ENCODE measurements at regions of chr18 and their contacts with region 1.

Region 1: GRCh38 chr18:74459889-74460288 is 2.8 kb upstream of the DIPK1C start:
- DNase-seq: no peak
- H3K4me3 ChIP-seq: no peak overlapping the region
- H3K27ac ChIP-seq: no peak overlapping the region
- H3K4me1 ChIP-seq: peaks cover 12% of the 10 kb centered on the region
- H3K27me3 ChIP-seq: no peaks in the 10 kb centered on the region
- CTCF ChIP-seq: no peak
- POLR2A ChIP-seq: no peak

Region 2: DNA sequence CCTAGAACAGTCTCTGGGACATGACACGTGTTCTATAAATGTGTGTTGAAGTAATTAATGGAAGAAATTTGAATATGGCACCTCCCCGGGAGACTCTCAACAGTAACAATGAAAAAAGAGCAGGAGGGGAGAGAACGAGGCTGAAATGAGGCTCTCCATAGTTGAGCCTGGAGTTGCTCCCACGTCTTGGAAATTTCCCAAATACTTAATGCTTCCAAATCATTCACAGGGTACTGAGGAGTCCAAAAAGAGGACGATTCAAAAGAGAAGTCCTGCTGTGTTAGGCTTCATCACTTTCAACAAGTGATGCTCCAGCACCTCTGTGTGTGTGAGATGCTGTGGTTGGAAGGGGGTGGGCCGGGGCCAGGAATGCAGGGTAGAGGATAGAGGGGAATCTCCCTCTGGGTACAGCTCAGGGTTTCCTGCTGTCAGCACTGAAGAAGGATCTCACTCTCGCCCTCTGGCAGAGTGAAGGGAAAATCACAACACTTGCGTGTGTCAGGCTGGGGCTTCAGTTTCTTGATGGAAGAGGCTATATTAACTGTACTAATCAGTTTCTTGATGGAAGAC is 119.7 kb after region 1 on chr18:
- intact Hi-C with region 1: no loop called
- DNase-seq: no peak
- H3K4me3 ChIP-seq: no peak overlapping the region
- H3K27ac ChIP-seq: no peak overlapping the region
- H3K4me1 ChIP-seq: no peaks in the 10 kb centered on the region
- H3K27me3 ChIP-seq: no peaks in the 10 kb centered on the region
- CTCF ChIP-seq: no peak
- POLR2A ChIP-seq: no peak

Region 3: GRCh38 chr18:75023473-75023872 is 563.6 kb after region 1 on chr18:
- intact Hi-C with region 1: loop called (anchors 5 kb)
- DNase-seq: no peak
- H3K4me3 ChIP-seq: no peak overlapping the region
- H3K27ac ChIP-seq: no peak overlapping the region
- H3K4me1 ChIP-seq: no peaks in the 10 kb centered on the region
- H3K27me3 ChIP-seq: no peaks in the 10 kb centered on the region
- CTCF ChIP-seq: no peak
- POLR2A ChIP-seq: no peak

Measured in vagina (tissue), 2 donors.